Naive thymus-derived CD4-positive, alpha-beta T cell (primary cell): ENCODE measurements at regions of chr1 and their contacts with region 1.

Region 1: GRCh38 chr1:9181176-9181906 is 52.4 kb upstream of the GPR157 start:
- DNase-seq: peak; percentile 34 to 89 (median 64)
- ATAC-seq: peak; percentile 71
- H3K4me3 ChIP-seq: peak overlapping the region; percentile 11
- H3K4me3 Mint-ChIP-seq: peak overlapping the region; percentile 69 to 96 (median 81)
- H3K27ac ChIP-seq: no peak overlapping the region
- H3K27ac Mint-ChIP-seq: peak overlapping the region in 1 of 9 donors; percentile 93
- H3K4me1 ChIP-seq: peaks cover 5% of the 10 kb centered on the region in 2 donors
- H3K4me1 Mint-ChIP-seq: peaks cover 0 to 25% (median 7%) of the 10 kb centered on the region in 7 donors
- H3K27me3 ChIP-seq: no peaks in the 10 kb centered on the region
- H3K27me3 Mint-ChIP-seq: peaks cover 11 to 31% (median 17%) of the 10 kb centered on the region in 5 donors

Region 2: GRCh38 chr1:9121496-9122409 is 59.6 kb before region 1 on chr1:
- CTCF ChIA-PET with region 1: no interaction called
- POLR2A ChIA-PET with region 1: no interaction called
- intact Hi-C with region 1: loop called (anchors 5 kb)
- DNase-seq: peak in 8 of 9 donors; percentile 41 to 64 (median 52)
- ATAC-seq: peak; percentile 97
- H3K4me3 ChIP-seq: no peak overlapping the region
- H3K4me3 Mint-ChIP-seq: peak overlapping the region; percentile 57 to 79 (median 70)
- H3K27ac ChIP-seq: no peak overlapping the region
- H3K27ac Mint-ChIP-seq: peak overlapping the region in 4 of 9 donors; percentile 5 to 86 (median 40)
- H3K4me1 ChIP-seq: peaks cover 6 to 28% of the 10 kb centered on the region in 2 donors
- H3K4me1 Mint-ChIP-seq: peaks cover 26 to 43% (median 34%) of the 10 kb centered on the region in 7 donors
- H3K27me3 ChIP-seq: no peaks in the 10 kb centered on the region
- H3K27me3 Mint-ChIP-seq: peaks cover 0 to 12% (median 0%) of the 10 kb centered on the region in 5 donors

Region 3: DNA sequence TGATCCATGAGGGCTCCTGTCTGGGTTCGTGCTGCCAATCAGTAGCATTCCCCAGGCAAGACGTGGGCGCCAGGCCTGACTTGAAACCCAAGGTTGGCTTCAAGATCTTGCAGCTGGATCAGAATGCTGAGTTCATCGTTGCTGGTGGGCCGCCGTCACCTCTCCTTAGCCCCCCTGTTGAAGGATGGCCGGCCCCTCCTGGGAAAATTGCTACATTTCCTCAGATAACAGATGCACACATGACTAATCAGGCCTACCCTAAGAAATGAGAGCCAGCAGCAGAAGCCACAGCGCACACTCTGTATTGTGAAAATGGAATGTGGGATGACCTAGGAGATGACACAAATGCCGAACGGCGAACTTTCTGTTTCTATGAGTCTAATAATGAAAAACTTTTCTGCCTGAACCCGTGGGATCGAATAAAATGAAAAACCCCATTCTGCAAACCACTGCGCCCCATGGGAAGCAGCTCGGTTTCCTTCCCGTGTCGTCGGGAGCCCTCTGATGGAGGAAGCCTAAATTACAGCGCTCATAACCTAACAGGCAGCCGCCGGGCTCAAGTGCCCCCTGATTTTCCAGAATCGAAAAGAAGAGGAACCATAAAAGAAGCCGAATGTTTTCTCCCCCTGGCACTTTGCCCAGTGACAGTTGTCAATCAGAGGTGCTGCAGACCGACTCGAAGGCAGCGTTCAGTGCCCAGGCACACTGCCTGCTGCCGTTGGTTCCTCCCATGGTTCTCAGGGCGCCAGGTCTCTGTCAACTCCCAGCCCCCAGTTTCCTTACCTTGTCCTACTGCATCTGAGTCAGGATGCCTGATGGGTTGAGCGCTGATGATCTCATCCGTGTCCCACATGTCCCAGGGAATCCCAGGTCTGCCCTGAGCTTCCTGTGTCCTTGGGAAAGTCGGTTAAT is 15.0 kb after region 1 on chr1:
- CTCF ChIA-PET with region 1: no interaction called
- POLR2A ChIA-PET with region 1: no interaction called
- intact Hi-C with region 1: loop called (anchors 1 kb)
- DNase-seq: peak in 8 of 9 donors; percentile 33 to 67 (median 50)
- ATAC-seq: peak; percentile 75
- H3K4me3 ChIP-seq: no peak overlapping the region
- H3K4me3 Mint-ChIP-seq: no peak overlapping the region
- H3K27ac ChIP-seq: no peak overlapping the region
- H3K27ac Mint-ChIP-seq: no peak overlapping the region
- H3K4me1 ChIP-seq: peaks cover 0 to 3% of the 10 kb centered on the region in 2 donors
- H3K4me1 Mint-ChIP-seq: peaks cover 11 to 20% (median 19%) of the 10 kb centered on the region in 7 donors
- H3K27me3 ChIP-seq: peaks cover 3 to 10% of the 10 kb centered on the region in 2 donors
- H3K27me3 Mint-ChIP-seq: peaks cover 46 to 74% (median 57%) of the 10 kb centered on the region in 5 donors

Region 4: GRCh38 chr1:9211291-9211811 is 30.0 kb after region 1 on chr1:
- CTCF ChIA-PET with region 1: no interaction called
- POLR2A ChIA-PET with region 1: no interaction called
- intact Hi-C with region 1: no loop called
- DNase-seq: no peak
- ATAC-seq: no peak
- H3K4me3 ChIP-seq: no peak overlapping the region
- H3K4me3 Mint-ChIP-seq: no peak overlapping the region
- H3K27ac ChIP-seq: no peak overlapping the region
- H3K27ac Mint-ChIP-seq: peak overlapping the region in 1 of 9 donors; percentile 80
- H3K4me1 ChIP-seq: no peaks in the 10 kb centered on the region
- H3K4me1 Mint-ChIP-seq: peaks cover 0 to 2% (median 0%) of the 10 kb centered on the region in 7 donors
- H3K27me3 ChIP-seq: peaks cover 0 to 3% of the 10 kb centered on the region in 2 donors
- H3K27me3 Mint-ChIP-seq: peaks cover 17 to 41% (median 20%) of the 10 kb centered on the region in 5 donors

Region 5: GRCh38 chr1:9455487-9456234 is 274.3 kb after region 1 on chr1:
- CTCF ChIA-PET with region 1: no interaction called
- POLR2A ChIA-PET with region 1: no interaction called
- intact Hi-C with region 1: loop called in 1 of 2 experiments (anchors 1 kb)
- DNase-seq: peak; percentile 26 to 70 (median 58)
- ATAC-seq: peak; percentile 76
- H3K4me3 ChIP-seq: no peak overlapping the region
- H3K4me3 Mint-ChIP-seq: no peak overlapping the region
- H3K27ac ChIP-seq: no peak overlapping the region
- H3K27ac Mint-ChIP-seq: peak overlapping the region in 1 of 9 donors; percentile 48
- H3K4me1 ChIP-seq: no peaks in the 10 kb centered on the region
- H3K4me1 Mint-ChIP-seq: no peaks in the 10 kb centered on the region
- H3K27me3 ChIP-seq: no peaks in the 10 kb centered on the region
- H3K27me3 Mint-ChIP-seq: peaks cover 0 to 22% (median 0%) of the 10 kb centered on the region in 5 donors